Right cardiac atrium (tissue), 5 donors: ENCODE measurements at regions of chr14 and their contacts with region 1.

Region 1: DNA sequence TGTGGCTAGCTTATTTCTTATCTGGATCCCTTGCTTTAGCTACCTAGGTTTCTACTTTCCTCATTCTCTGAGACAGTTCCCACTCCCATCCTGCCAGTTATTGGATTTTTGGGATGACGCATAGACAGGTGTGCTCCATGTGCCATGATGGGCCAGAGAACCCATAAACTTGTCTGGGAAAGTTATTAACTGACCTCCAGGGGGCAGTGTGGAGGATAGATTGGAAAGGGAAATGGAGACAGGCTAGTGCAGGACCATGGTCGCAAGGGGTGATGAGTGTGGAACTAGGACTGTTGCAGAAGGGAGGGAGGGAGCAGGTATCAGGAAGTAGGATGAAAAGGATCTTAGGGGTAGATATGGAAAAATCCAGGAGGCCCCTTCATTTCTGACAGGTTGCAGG is 80.3 kb downstream of the ESRRB start:
- DNase-seq: peak in 1 of 3 donors; percentile 19
- ATAC-seq: peak; percentile 35 to 54
- H3K4me3 ChIP-seq: no peak overlapping the region
- H3K27ac ChIP-seq: no peak overlapping the region
- H3K4me1 ChIP-seq: no peaks in the 10 kb centered on the region
- H3K27me3 ChIP-seq: no peaks in the 10 kb centered on the region

Region 2: GRCh38 chr14:76647697-76648298 is 191.6 kb after region 1 on chr14:
- intact Hi-C with region 1: loop called in 3 of 4 experiments (anchors 2 to 10 kb)
- DNase-seq: no peak
- ATAC-seq: peak; percentile 60 to 70
- H3K4me3 ChIP-seq: no peak overlapping the region
- H3K27ac ChIP-seq: no peak overlapping the region
- H3K4me1 ChIP-seq: no peaks in the 10 kb centered on the region
- H3K27me3 ChIP-seq: no peaks in the 10 kb centered on the region